ENCODE measurements at regions of chr11 and their contacts with region 1.

Region 1: DNA sequence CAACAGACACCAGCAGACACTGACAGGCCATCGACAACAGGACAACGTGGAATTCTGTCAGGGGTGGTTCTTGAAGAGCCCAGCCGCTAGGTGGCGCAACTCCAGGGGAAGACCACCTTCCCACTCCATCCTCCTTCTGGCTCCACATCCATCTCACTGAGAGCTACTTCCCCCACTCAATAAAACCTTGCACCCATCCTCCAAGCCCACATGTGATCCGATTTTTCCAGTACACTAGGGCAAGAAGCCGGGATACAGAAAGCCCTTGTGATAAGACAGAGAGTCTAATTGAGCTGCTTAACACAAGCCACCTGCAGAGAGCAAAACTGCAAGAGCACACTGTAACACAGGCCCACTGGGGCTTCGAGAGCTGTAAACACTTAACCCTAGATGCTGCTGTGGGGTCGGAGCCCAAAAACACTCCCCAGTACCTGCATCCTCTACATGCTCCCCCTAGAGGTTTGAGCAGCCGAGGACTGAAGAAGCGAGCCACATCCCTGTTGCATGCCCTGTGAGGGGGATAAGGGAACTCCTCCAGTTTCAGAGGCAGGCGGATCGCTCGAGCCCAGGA is 11.5 kb upstream of the RAB39A start:
- DNase-seq: no peak
- H3K4me3 ChIP-seq: no peak overlapping the region
- CTCF ChIP-seq: no peak
- POLR2A ChIP-seq: no peak

Region 2: GRCh38 chr11:105975128-105975527 is 1941.6 kb before region 1 on chr11:
- intact Hi-C with region 1: loop called (anchors 5 kb)
- DNase-seq: no peak
- H3K4me3 ChIP-seq: no peak overlapping the region
- CTCF ChIP-seq: no peak
- POLR2A ChIP-seq: no peak

Region 3: GRCh38 chr11:107808521-107808920 is 108.2 kb before region 1 on chr11:
- intact Hi-C with region 1: no loop called
- DNase-seq: no peak
- H3K4me3 ChIP-seq: no peak overlapping the region
- CTCF ChIP-seq: no peak
- POLR2A ChIP-seq: no peak